Activated CD4-positive, alpha-beta memory T cell treated with anti-CD3 and anti-CD28 coated beads for 36 hours (primary cell): ENCODE measurements at regions of chr12 and their contacts with region 1.

Region 1: GRCh38 chr12:71840231-71840847 is 780 bp downstream of the TBC1D15 start:
- DNase-seq: peak; percentile 18
- H3K4me3 Mint-ChIP-seq: peak overlapping the region; percentile 97
- H3K27ac Mint-ChIP-seq: peak overlapping the region; percentile 99
- H3K4me1 Mint-ChIP-seq: peaks cover 32% of the 10 kb centered on the region
- H3K27me3 Mint-ChIP-seq: no peaks in the 10 kb centered on the region

Region 2: GRCh38 chr12:71642264-71642663 is 198.1 kb before region 1 on chr12:
- CTCF ChIA-PET with region 1: no interaction called
- POLR2A ChIA-PET with region 1: no interaction called
- intact Hi-C with region 1: loop called (anchors 5 kb)
- DNase-seq: no peak
- H3K4me3 Mint-ChIP-seq: no peak overlapping the region
- H3K27ac Mint-ChIP-seq: peak overlapping the region; percentile 65
- H3K4me1 Mint-ChIP-seq: peaks cover 55% of the 10 kb centered on the region
- H3K27me3 Mint-ChIP-seq: no peaks in the 10 kb centered on the region

Region 3: DNA sequence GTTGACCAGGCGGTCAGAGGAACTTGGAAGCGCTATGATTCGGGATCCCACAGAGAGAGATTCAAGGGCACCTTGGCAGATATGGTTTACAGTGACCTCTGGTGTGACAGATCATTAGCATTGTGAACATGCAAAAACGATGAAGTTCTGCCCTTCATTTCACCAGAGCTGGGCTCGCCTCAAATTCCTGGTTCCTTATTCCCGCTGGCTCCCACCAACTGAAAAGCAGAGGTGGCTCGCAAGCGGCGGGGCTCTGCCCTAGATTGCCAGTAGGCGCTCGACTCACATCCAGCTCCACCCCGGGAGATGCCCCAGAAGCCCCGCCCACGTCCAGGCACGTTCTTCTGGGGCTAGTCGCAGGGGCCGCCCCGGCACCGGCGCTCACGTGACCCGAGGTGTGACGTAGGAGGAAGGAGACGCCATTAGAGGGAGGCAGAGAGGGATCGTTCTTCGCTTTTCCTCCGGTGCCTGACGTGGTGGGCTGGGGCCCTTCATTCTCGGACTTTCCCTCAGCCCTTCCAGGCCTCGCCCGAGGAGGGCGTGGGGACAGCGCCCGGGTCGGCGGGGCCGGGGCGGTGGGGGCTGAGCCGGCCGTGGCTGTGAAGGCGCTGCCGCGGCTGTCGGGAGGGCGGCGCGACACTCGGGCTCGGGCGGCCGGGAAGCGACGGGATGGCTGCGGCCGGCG is 85.7 kb before region 1 on chr12 and contains the start of gene RAB21:
- CTCF ChIA-PET with region 1: no interaction called
- POLR2A ChIA-PET with region 1: interaction called, 23 read pairs
- intact Hi-C with region 1: loop called (anchors 1 kb)
- DNase-seq: peak; percentile 99
- H3K4me3 Mint-ChIP-seq: peak within 1 kb of the TSS; percentile 95
- H3K27ac Mint-ChIP-seq: peak within 1 kb of the TSS; percentile 98
- H3K4me1 Mint-ChIP-seq: peaks cover 35% of the 10 kb centered on the region
- H3K27me3 Mint-ChIP-seq: peaks cover 1% of the 10 kb centered on the region
- total RNA-seq, gene RAB21: 72.7 to 76.8 TPM

Region 4: GRCh38 chr12:71890475-71890874 is 50.1 kb after region 1 on chr12:
- CTCF ChIA-PET with region 1: no interaction called
- POLR2A ChIA-PET with region 1: interaction called, 3 read pairs
- intact Hi-C with region 1: loop called (anchors 5 kb)
- DNase-seq: no peak
- H3K4me3 Mint-ChIP-seq: no peak overlapping the region
- H3K27ac Mint-ChIP-seq: no peak overlapping the region
- H3K4me1 Mint-ChIP-seq: peaks cover 8% of the 10 kb centered on the region
- H3K27me3 Mint-ChIP-seq: no peaks in the 10 kb centered on the region